GM12878 (cell line): ENCODE measurements at regions of chr2 and their contacts with region 1.

Region 1: GRCh38 chr2:227545990-227546389 is 52.7 kb upstream of the SCYGR2 start:
- DNase-seq: no peak
- ATAC-seq: 0 out of 3 replicates have a peak, but pooled peaks have one; percentile 22
- H3K4me3 ChIP-seq: no peak overlapping the region
- H3K27ac ChIP-seq: no peak overlapping the region
- H3K4me1 ChIP-seq: no peaks in the 10 kb centered on the region
- H3K27me3 ChIP-seq: no peaks in the 10 kb centered on the region
- CTCF ChIP-seq: peak; percentile 2 to 43 (median 36); a peak in 2 of 6 replicates
- EP300 ChIP-seq: no peak
- POLR2A ChIP-seq: no peak
- RAD21 ChIP-seq: peak; percentile 37; the same call in 1 of the 2 replicates

Region 2: GRCh38 chr2:227363756-227364155 is 182.2 kb before region 1 on chr2:
- CTCF ChIA-PET with region 1: no interaction called
- POLR2A ChIA-PET with region 1: no interaction called
- RAD21 ChIA-PET with region 1: no interaction called
- SMC1A ChIA-PET with region 1: no interaction called
- in situ Hi-C with region 1: no loop called
- intact Hi-C with region 1: no loop called
- DNase-seq: no peak
- ATAC-seq: no peak
- H3K4me3 ChIP-seq: no peak overlapping the region
- H3K27ac ChIP-seq: no peak overlapping the region
- H3K4me1 ChIP-seq: no peaks in the 10 kb centered on the region
- H3K27me3 ChIP-seq: no peaks in the 10 kb centered on the region
- CTCF ChIP-seq: peak in 2 of 3 experiments; percentile 13 to 34; a peak in 2 of 6 replicates
- EP300 ChIP-seq: no peak
- POLR2A ChIP-seq: no peak
- RAD21 ChIP-seq: peak; percentile 30; the same call in 1 of the 2 replicates

Region 3: GRCh38 chr2:227374158-227374557 is 171.8 kb before region 1 on chr2:
- CTCF ChIA-PET with region 1: no interaction called
- POLR2A ChIA-PET with region 1: no interaction called
- RAD21 ChIA-PET with region 1: no interaction called
- SMC1A ChIA-PET with region 1: no interaction called
- in situ Hi-C with region 1: no loop called
- intact Hi-C with region 1: no loop called
- DNase-seq: no peak
- ATAC-seq: peak; percentile 87
- H3K4me3 ChIP-seq: no peak overlapping the region
- H3K27ac ChIP-seq: no peak overlapping the region
- H3K4me1 ChIP-seq: no peaks in the 10 kb centered on the region
- H3K27me3 ChIP-seq: no peaks in the 10 kb centered on the region
- CTCF ChIP-seq: no peak
- EP300 ChIP-seq: peak; percentile 42 to 57; a peak in 2 of 4 replicates
- POLR2A ChIP-seq: no peak
- RAD21 ChIP-seq: no peak

Region 4: GRCh38 chr2:227528803-227529202 is 17.2 kb before region 1 on chr2:
- CTCF ChIA-PET with region 1: interaction called, 3 read pairs
- POLR2A ChIA-PET with region 1: interaction called, 3 read pairs
- RAD21 ChIA-PET with region 1: no interaction called
- SMC1A ChIA-PET with region 1: interaction called, 4 read pairs
- in situ Hi-C with region 1: no loop called
- intact Hi-C with region 1: loop called (anchors 2 kb)
- DNase-seq: no peak
- ATAC-seq: no peak
- H3K4me3 ChIP-seq: no peak overlapping the region
- H3K27ac ChIP-seq: no peak overlapping the region
- H3K4me1 ChIP-seq: 0 out of 2 replicates have a peak, but pooled peaks cover under 1% of the 10 kb centered on the region
- H3K27me3 ChIP-seq: no peaks in the 10 kb centered on the region
- CTCF ChIP-seq: no peak
- EP300 ChIP-seq: no peak
- POLR2A ChIP-seq: no peak
- RAD21 ChIP-seq: no peak

Region 5: GRCh38 chr2:227623234-227623633 is 77.2 kb after region 1 on chr2:
- CTCF ChIA-PET with region 1: no interaction called
- POLR2A ChIA-PET with region 1: no interaction called
- RAD21 ChIA-PET with region 1: no interaction called
- SMC1A ChIA-PET with region 1: no interaction called
- in situ Hi-C with region 1: no loop called
- intact Hi-C with region 1: no loop called
- DNase-seq: no peak
- ATAC-seq: no peak
- H3K4me3 ChIP-seq: no peak overlapping the region
- H3K27ac ChIP-seq: no peak overlapping the region
- H3K4me1 ChIP-seq: peaks cover 5% of the 10 kb centered on the region; the same call in 1 of the 2 replicates
- H3K27me3 ChIP-seq: no peaks in the 10 kb centered on the region
- CTCF ChIP-seq: no peak
- EP300 ChIP-seq: no peak
- POLR2A ChIP-seq: no peak
- RAD21 ChIP-seq: no peak